ENCODE measurements at regions of chr14 and their contacts with region 1.

Region 1: DNA sequence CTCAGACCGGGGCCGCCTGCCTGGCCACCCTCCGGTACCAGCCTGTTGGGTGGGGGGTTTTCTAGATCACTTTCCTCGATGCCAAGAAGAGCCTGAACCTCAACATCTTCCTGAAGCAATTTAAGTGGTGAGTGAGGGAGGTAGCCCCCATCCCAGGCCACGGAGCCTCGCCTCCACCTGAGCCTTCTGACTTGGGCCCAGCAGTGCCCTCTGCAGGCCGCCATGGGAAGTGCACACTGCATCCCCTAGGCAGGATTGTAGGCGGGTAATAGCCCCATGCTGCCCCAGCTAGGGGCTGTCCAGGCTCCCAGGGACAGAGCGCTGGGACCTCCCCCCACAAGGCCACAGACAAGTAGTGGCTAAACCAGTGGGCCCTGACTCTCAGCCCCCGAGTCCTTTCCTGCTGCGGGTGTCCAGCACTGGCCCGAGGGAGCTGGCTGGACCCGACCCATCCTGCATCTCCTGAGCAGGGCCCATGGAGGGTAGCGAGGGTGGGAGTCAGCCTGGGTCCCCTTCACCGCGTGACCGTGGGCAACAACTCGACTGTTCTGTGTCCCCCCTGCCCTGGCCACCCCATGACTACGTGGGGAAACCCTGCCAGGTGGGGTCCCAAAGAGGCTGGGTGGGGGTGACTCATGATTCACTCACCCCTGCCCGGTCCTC is 15.3 kb upstream of the ADSS1 start:
- DNase-seq: peak; percentile 83
- ATAC-seq: peak; percentile 97
- H3K4me3 ChIP-seq: no peak overlapping the region
- H3K4me3 Mint-ChIP-seq: no peak overlapping the region
- H3K27ac ChIP-seq: no peak overlapping the region
- H3K27ac Mint-ChIP-seq: peak overlapping the region; percentile 59
- H3K4me1 ChIP-seq: peaks cover 7 to 12% of the 10 kb centered on the region in 2 donors
- H3K4me1 Mint-ChIP-seq: peaks cover 4% of the 10 kb centered on the region
- H3K27me3 ChIP-seq: no peaks in the 10 kb centered on the region
- H3K27me3 Mint-ChIP-seq: no peaks in the 10 kb centered on the region
- CTCF ChIP-seq: peak; percentile 97

Region 2: DNA sequence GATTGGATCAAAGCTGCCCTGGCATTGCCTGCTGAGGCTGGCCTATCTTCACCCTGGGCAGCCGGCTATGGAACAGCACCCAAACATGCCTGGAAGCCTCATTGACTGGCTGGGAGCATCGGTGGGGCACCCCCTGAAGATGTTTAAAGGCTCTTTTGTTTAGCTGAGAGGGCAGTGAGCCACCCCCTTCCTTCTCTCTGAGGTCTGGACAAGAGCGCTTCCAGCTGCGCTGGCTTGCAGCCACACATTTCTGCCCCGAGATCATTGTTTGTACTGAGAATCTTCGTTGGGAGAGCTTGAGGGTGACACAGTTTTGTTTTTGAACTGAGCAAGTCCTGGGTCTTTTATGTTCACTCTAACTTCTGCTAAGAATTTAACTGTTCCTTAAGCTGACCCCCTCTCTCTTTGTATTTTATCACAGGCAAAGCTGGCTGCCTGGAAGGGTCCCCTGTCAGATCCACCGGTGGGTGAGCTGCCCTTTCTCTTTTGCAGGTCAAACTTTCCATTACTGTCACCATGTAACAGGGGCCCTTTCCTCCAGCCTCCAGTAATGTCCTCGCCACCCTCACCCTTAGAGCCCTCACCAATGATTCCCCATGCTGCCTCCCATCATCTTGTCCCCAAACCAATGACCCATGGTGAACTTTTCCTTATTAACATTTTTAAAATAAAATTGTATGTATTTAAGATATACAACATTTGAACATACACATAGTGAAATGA is 358.1 kb before region 1 on chr14:
- CTCF ChIA-PET with region 1: no interaction called
- POLR2A ChIA-PET with region 1: no interaction called
- intact Hi-C with region 1: no loop called
- DNase-seq: no peak
- ATAC-seq: no peak
- H3K4me3 ChIP-seq: no peak overlapping the region
- H3K4me3 Mint-ChIP-seq: no peak overlapping the region
- H3K27ac ChIP-seq: no peak overlapping the region
- H3K27ac Mint-ChIP-seq: no peak overlapping the region
- H3K4me1 ChIP-seq: no peaks in the 10 kb centered on the region
- H3K4me1 Mint-ChIP-seq: no peaks in the 10 kb centered on the region
- H3K27me3 ChIP-seq: peaks cover 0 to 4% (median 0%) of the 10 kb centered on the region in 4 experiments
- H3K27me3 Mint-ChIP-seq: peaks cover 23% of the 10 kb centered on the region
- CTCF ChIP-seq: no peak

Region 3: DNA sequence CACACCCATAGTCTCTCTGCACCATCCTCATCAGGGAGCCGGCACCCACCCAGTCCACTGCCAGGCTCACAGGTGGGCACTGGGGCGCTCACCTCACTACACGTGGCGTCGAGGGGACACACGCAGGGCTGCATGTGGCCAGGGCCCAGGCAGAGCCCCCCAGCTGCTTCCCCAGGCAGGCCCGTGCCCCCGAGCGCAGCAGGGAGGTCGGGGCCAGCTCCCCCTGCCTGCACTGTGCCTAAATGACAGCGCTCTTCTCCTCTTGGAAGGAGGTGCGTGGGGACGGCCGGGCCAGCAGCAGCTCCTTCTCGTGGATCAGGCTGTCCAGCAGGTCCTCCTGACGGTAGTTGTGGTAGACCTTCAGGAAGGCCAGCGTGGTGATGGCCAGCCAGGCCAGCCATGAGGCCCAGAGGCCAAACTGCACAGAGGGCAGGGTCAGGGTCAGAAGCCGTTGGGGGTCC is 115.5 kb before region 1 on chr14:
- CTCF ChIA-PET with region 1: no interaction called
- POLR2A ChIA-PET with region 1: no interaction called
- intact Hi-C with region 1: no loop called
- DNase-seq: no peak
- ATAC-seq: no peak
- H3K4me3 ChIP-seq: no peak overlapping the region
- H3K4me3 Mint-ChIP-seq: no peak overlapping the region
- H3K27ac ChIP-seq: no peak overlapping the region
- H3K27ac Mint-ChIP-seq: no peak overlapping the region
- H3K4me1 ChIP-seq: no peaks in the 10 kb centered on the region
- H3K4me1 Mint-ChIP-seq: no peaks in the 10 kb centered on the region
- H3K27me3 ChIP-seq: peaks cover 0 to 5% (median 0%) of the 10 kb centered on the region in 4 experiments
- H3K27me3 Mint-ChIP-seq: peaks cover 16% of the 10 kb centered on the region
- CTCF ChIP-seq: no peak

Region 4: DNA sequence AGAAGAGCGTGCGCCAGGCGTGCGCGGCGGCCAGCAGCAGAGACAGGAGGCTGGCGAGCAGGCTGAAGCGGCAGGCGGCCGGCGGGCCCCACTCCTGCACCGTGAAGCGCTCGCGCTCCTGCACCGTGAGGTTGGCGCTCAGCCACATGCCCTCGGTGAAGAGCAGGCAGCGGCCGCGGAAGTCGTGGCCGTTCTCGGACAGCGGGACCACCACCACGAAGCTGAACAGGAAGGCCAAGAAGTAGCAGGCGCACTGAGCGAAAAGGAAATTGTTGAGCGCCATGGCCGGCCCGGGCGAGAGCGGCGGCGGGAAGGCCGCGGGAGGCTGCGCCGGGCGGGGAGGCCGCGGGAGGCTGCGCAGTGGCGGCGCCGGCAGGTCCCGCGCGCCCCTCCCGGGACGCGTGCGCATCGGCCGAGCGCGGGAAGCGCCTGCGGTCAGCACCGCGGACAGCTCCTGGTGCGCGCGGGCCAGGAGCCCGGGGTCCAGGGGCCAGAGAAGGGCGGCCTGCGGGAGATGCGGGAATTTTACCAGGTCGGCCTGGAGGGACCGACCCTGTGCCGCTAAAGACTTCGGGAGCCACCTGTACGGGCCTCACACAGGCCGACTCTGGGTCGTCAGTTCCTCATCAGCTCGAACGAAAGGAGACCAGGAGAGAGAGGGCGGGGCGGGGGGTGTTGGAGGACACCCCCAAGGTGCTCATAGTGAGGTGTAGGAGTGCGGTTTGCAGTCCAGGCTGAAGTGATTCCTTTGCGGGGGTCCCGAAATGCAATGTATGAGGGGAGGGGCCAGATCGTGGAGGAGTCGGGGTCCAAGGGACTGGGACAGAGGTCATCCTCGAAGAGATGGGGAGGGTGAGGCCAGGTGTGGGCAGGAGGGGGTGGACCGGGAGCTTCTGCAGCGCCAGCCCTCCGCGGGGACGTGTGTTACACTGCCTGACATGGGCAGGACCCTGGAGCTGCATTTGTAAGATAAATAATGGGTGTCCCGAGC is 104.0 kb before region 1 on chr14 and contains the start of gene TMEM179:
- CTCF ChIA-PET with region 1: no interaction called
- POLR2A ChIA-PET with region 1: no interaction called
- intact Hi-C with region 1: no loop called
- DNase-seq: no peak
- ATAC-seq: no peak
- H3K4me3 ChIP-seq: no peak within 1 kb of the TSS
- H3K4me3 Mint-ChIP-seq: no peak within 1 kb of the TSS
- H3K27ac ChIP-seq: no peak within 1 kb of the TSS
- H3K27ac Mint-ChIP-seq: no peak within 1 kb of the TSS
- H3K4me1 ChIP-seq: no peaks in the 10 kb centered on the region
- H3K4me1 Mint-ChIP-seq: peaks cover 2% of the 10 kb centered on the region
- H3K27me3 ChIP-seq: peaks cover 0 to 47% (median 6%) of the 10 kb centered on the region in 4 experiments
- H3K27me3 Mint-ChIP-seq: peaks cover 57% of the 10 kb centered on the region
- CTCF ChIP-seq: no peak
- total RNA-seq, gene TMEM179: not detected in 2 replicates

Region 5: GRCh38 chr14:104650057-104650981 is 58.4 kb before region 1 on chr14:
- CTCF ChIA-PET with region 1: interaction called, 17 read pairs
- POLR2A ChIA-PET with region 1: no interaction called
- intact Hi-C with region 1: loop called (anchors 1 kb)
- DNase-seq: peak; percentile 87
- ATAC-seq: peak; percentile 97
- H3K4me3 ChIP-seq: peak overlapping the region in 4 of 5 experiments; percentile 59 to 68 (median 62)
- H3K4me3 Mint-ChIP-seq: peak overlapping the region; percentile 83
- H3K27ac ChIP-seq: peak overlapping the region; percentile 59 to 70
- H3K27ac Mint-ChIP-seq: peak overlapping the region; percentile 74
- H3K4me1 ChIP-seq: peaks cover 35 to 47% of the 10 kb centered on the region in 2 donors
- H3K4me1 Mint-ChIP-seq: peaks cover 51% of the 10 kb centered on the region
- H3K27me3 ChIP-seq: no peaks in the 10 kb centered on the region
- H3K27me3 Mint-ChIP-seq: no peaks in the 10 kb centered on the region
- CTCF ChIP-seq: peak; percentile 99

Region 6: DNA sequence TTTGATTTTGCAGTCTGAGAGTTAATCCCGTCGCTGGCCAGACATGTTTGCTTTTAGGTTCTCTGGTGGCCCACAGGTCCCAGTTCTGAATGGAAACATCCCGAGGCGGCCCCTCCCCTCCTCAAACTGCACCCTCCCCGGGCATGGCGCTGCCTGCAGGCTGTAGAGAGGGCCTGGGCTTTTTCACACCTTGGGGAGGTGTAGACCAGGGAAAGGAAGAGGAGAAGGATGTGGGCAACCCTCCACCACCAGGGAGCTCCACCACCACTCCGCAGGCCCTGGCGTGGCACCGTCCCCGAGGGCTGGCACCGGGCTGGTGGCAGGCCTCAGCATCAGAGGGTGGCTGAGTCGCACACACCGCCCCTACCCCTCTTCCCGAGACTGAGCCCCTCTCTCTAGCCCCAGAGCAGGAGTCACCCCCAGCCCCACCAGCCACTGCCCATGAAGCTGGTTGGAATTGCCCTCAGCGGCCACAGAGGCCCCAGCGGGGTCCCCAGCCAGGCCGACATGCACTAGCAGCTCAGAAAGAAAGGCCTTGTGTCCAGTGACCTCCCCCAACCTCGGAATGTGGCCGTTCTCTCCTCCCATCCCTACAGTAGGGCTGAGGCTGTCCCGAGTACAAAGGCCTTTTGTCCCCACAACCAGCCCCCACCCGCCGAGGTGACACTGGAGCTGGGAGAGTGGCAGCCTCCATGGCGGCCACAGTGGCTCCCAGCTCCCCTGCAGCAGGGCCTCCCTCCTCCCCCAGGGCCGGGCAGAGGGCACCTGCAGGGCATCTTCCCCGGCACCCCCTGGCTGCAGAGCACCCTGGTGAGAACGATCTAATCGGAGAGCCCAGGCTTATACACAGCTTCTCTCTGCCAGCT is 42.8 kb before region 1 on chr14:
- CTCF ChIA-PET with region 1: interaction called, 8 read pairs
- POLR2A ChIA-PET with region 1: no interaction called
- intact Hi-C with region 1: loop called (anchors 1 kb)
- DNase-seq: peak; percentile 72
- ATAC-seq: peak; percentile 50
- H3K4me3 ChIP-seq: peak overlapping the region in 2 of 5 experiments; percentile 5 to 15
- H3K4me3 Mint-ChIP-seq: peak overlapping the region; percentile 73
- H3K27ac ChIP-seq: peak overlapping the region; percentile 52 to 65
- H3K27ac Mint-ChIP-seq: peak overlapping the region; percentile 89
- H3K4me1 ChIP-seq: peaks cover 40 to 49% of the 10 kb centered on the region in 2 donors
- H3K4me1 Mint-ChIP-seq: peaks cover 45% of the 10 kb centered on the region
- H3K27me3 ChIP-seq: no peaks in the 10 kb centered on the region
- H3K27me3 Mint-ChIP-seq: no peaks in the 10 kb centered on the region
- CTCF ChIP-seq: peak; percentile 57